Naive thymus-derived CD4-positive, alpha-beta T cell (primary cell): ENCODE measurements at regions of chr7 and their contacts with region 1.

Region 1: DNA sequence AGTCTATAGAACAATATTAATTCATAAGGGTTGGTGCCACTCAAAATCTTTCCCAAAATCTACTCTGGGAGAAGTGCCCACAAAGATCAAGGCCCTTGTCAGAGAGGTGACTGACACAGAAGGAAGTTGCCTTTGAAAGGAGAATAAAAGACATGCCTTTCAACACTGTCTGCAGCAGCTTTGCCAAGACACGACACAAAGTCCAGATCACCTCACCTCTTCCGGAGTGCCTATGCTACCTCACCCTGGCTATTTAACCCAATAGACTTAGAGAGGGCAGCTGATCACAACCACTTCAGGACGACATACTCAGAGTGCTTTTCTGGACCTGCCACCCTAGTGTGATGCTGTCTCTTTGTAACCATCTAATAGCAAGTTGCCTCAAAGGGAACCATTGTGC is 49.0 kb upstream of the YAE1 start:
- DNase-seq: no peak
- ATAC-seq: no peak
- H3K4me3 ChIP-seq: no peak overlapping the region
- H3K4me3 Mint-ChIP-seq: no peak overlapping the region
- H3K27ac ChIP-seq: no peak overlapping the region
- H3K27ac Mint-ChIP-seq: no peak overlapping the region
- H3K4me1 ChIP-seq: no peaks in the 10 kb centered on the region
- H3K4me1 Mint-ChIP-seq: peaks cover 0 to 3% (median 0%) of the 10 kb centered on the region in 7 donors
- H3K27me3 ChIP-seq: no peaks in the 10 kb centered on the region
- H3K27me3 Mint-ChIP-seq: peaks cover 2 to 11% (median 5%) of the 10 kb centered on the region in 5 donors

Region 2: DNA sequence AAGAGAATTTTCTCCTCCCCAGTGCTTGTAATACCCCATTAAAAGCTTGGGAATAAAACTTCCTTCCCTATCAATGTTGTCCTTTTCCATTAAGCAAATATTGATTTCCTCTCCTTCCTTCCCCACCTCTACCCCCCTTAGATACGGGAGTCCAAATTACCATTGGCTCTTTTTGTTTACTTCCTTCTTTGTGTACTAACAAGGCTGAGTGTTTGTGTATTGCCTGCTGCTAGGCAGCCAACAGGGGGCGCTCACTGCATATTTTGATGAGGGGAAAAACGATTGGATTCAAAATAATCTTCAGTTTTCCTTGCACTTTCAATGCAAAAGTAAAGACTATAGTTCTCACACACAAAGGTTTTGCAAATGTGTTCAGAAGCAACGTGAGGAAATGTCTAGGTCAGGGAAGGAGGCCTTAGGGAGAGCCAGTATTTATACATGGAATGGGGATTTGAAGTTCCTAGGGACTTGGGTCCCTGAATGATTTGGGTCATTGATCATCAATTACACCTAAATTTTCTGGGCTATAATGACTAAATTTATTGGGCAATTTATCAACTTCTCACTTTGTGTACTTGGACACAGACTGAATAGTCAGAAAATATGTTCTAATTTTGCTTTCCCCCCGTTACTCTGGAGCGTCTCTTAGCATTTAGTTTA is 584.6 kb before region 1 on chr7:
- CTCF ChIA-PET with region 1: no interaction called
- POLR2A ChIA-PET with region 1: no interaction called
- intact Hi-C with region 1: loop called (anchors 1 kb)
- DNase-seq: peak in 3 of 9 donors; percentile 9 to 38 (median 19)
- ATAC-seq: peak; percentile 41
- H3K4me3 ChIP-seq: no peak overlapping the region
- H3K4me3 Mint-ChIP-seq: no peak overlapping the region
- H3K27ac ChIP-seq: no peak overlapping the region
- H3K27ac Mint-ChIP-seq: no peak overlapping the region
- H3K4me1 ChIP-seq: no peaks in the 10 kb centered on the region
- H3K4me1 Mint-ChIP-seq: peaks cover 0 to 8% (median 0%) of the 10 kb centered on the region in 7 donors
- H3K27me3 ChIP-seq: no peaks in the 10 kb centered on the region
- H3K27me3 Mint-ChIP-seq: peaks cover 7 to 20% (median 16%) of the 10 kb centered on the region in 5 donors

Region 3: DNA sequence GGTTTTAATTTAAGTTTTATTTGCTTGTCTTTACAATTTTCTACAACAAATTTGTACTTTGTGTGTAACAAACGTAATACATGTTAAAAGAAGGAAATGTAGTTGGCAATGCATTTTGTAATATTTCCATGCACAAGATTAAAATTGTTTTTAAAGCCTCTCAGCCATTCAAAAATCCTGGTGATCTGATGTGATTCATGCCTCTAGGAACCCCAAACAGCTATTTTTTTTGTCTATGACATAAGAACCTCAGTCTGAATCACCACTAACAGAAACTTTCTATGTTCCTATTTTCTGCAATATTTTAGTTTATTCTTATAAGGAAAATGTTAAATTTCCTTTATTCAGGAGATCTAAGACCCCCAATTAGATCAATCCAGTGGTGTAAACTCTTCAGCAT is 134.1 kb before region 1 on chr7:
- CTCF ChIA-PET with region 1: no interaction called
- POLR2A ChIA-PET with region 1: no interaction called
- intact Hi-C with region 1: no loop called
- DNase-seq: no peak
- ATAC-seq: no peak
- H3K4me3 ChIP-seq: no peak overlapping the region
- H3K4me3 Mint-ChIP-seq: no peak overlapping the region
- H3K27ac ChIP-seq: no peak overlapping the region
- H3K27ac Mint-ChIP-seq: no peak overlapping the region
- H3K4me1 ChIP-seq: no peaks in the 10 kb centered on the region
- H3K4me1 Mint-ChIP-seq: no peaks in the 10 kb centered on the region
- H3K27me3 ChIP-seq: no peaks in the 10 kb centered on the region
- H3K27me3 Mint-ChIP-seq: peaks cover 7 to 34% (median 14%) of the 10 kb centered on the region in 5 donors

Region 4: DNA sequence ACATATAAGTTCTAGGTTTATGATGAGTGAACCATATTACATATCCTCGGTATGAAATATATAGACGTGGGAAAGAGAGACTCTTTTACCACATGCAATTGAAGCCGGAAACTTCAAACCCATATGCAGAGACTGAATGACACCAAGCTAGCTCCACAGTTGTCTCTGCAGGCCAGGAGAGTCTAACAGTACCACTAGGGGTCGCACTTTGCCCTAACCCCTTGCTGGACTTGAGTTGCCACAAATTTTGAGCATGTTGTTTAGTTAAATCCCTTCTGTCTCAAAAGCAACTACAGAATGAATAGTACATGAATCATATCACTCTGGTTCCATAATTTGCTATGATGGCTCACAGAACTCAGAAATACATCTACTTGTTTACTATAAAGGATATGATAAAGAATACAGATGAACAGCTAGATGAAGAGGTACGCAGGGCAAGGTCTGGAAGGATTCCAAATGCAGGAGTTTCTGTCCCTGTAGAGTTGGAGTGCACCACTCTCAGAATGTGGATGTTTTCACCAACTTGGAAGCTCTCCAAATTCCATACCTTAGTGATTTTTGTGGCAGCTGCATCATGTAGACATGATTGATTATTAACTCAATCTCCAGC is 63.4 kb before region 1 on chr7:
- CTCF ChIA-PET with region 1: no interaction called
- POLR2A ChIA-PET with region 1: no interaction called
- intact Hi-C with region 1: loop called (anchors 1 kb)
- DNase-seq: peak in 7 of 9 donors; percentile 27 to 53 (median 46)
- ATAC-seq: peak; percentile 74
- H3K4me3 ChIP-seq: no peak overlapping the region
- H3K4me3 Mint-ChIP-seq: no peak overlapping the region
- H3K27ac ChIP-seq: no peak overlapping the region
- H3K27ac Mint-ChIP-seq: no peak overlapping the region
- H3K4me1 ChIP-seq: no peaks in the 10 kb centered on the region
- H3K4me1 Mint-ChIP-seq: no peaks in the 10 kb centered on the region
- H3K27me3 ChIP-seq: no peaks in the 10 kb centered on the region
- H3K27me3 Mint-ChIP-seq: peaks cover 4 to 15% (median 12%) of the 10 kb centered on the region in 5 donors